ENCODE measurements at regions of chr19 and their contacts with region 1.

Region 1: DNA sequence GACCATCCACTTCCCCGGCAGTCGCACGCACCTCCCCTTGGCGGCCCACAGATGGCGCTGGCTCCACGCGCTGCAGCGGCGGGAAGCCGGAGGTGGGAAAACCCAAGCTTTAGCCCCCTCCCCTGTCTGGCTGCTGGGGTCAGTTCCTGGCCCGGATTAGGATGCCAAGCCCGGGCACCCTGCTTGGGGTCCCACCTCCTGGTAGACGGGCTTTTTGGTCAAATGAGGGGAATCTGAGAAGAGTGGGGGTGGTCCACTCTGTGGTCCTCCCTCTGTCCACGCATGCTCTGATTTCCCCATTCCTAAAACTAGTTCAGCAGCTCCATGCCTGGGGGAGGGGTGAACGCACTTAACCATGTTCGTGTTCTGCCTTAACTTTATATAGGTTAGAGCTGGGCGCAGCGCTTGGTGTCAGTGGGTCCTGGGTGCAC is 8.1 kb upstream of the ADGRE2 start:
- DNase-seq: no peak
- H3K4me3 ChIP-seq: peak overlapping the region in 1 of 3 experiments; percentile 11
- H3K27ac ChIP-seq: no peak overlapping the region
- H3K4me1 ChIP-seq: peaks cover 23% of the 10 kb centered on the region
- H3K27me3 ChIP-seq: no peaks in the 10 kb centered on the region
- CTCF ChIP-seq: peak; percentile 69 to 96

Region 2: GRCh38 chr19:14571695-14572490 is 214.5 kb before region 1 on chr19 and contains the start of gene NDUFB7:
- CTCF ChIA-PET with region 1: no interaction called
- dilution Hi-C with region 1: no loop called
- in situ Hi-C with region 1: no loop called
- intact Hi-C with region 1: loop called (anchors 1 kb)
- DNase-seq: peak; percentile 94
- H3K4me3 ChIP-seq: peak within 1 kb of the TSS; percentile 67 to 100 (median 99)
- H3K27ac ChIP-seq: peak within 1 kb of the TSS; percentile 70
- H3K4me1 ChIP-seq: peaks cover 14% of the 10 kb centered on the region
- H3K27me3 ChIP-seq: no peaks in the 10 kb centered on the region
- CTCF ChIP-seq: peak; percentile 68 to 85
- total RNA-seq, gene NDUFB7: 142 to 177 TPM

Region 3: DNA sequence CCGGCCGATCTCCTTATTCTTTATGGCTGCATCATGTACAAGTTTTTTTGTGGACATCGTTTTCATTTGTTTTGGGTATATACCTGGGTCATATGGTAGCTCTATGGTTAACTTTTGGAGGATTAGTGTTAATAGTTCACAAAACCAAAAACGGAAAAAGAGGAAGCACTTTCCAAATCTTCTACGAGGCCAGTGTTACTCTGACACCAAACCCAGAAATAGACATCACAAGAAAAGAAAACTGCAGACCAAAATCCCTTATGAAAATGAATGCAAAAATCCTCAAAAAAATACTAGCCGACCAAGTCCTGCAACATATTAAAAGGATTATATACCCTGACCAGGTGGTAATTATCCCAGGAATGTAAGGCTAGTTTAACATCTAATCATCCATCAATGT is 37.8 kb before region 1 on chr19:
- CTCF ChIA-PET with region 1: interaction called, 16 read pairs
- dilution Hi-C with region 1: no loop called
- in situ Hi-C with region 1: no loop called
- intact Hi-C with region 1: no loop called
- DNase-seq: no peak
- H3K4me3 ChIP-seq: no peak overlapping the region
- H3K27ac ChIP-seq: no peak overlapping the region
- H3K4me1 ChIP-seq: no peaks in the 10 kb centered on the region
- H3K27me3 ChIP-seq: no peaks in the 10 kb centered on the region
- CTCF ChIP-seq: no peak

Region 4: DNA sequence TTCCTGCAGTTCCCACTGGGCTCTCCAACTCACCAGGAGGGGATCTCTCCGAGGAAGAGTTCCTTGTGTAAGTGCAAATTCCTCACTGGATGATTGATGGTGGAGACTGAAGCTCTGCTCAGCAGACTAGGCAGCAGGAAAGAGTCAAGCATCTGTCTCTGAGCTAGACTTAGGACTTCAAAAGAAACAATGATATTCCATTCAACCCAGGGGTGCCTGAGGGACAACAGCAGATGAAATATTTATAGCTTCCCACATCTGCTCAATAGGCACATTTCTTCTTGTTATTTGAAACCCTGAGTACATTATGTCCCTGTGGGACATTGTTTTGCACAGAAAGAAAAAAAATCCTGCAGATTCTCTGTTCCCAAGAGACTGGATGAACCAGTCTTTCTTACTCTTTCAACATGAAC is 48.6 kb after region 1 on chr19 and contains the starts of genes OR7A5 and OR7C1:
- CTCF ChIA-PET with region 1: no interaction called
- dilution Hi-C with region 1: no loop called
- in situ Hi-C with region 1: no loop called
- intact Hi-C with region 1: no loop called
- DNase-seq: no peak
- H3K4me3 ChIP-seq: no peak within 1 kb of the TSS
- H3K27ac ChIP-seq: no peak within 1 kb of the TSS
- H3K4me1 ChIP-seq: peaks cover 3% of the 10 kb centered on the region
- H3K27me3 ChIP-seq: no peaks in the 10 kb centered on the region
- CTCF ChIP-seq: no peak
- total RNA-seq, gene OR7A5: not detected
- total RNA-seq, gene OR7C1: not detected

Region 5: DNA sequence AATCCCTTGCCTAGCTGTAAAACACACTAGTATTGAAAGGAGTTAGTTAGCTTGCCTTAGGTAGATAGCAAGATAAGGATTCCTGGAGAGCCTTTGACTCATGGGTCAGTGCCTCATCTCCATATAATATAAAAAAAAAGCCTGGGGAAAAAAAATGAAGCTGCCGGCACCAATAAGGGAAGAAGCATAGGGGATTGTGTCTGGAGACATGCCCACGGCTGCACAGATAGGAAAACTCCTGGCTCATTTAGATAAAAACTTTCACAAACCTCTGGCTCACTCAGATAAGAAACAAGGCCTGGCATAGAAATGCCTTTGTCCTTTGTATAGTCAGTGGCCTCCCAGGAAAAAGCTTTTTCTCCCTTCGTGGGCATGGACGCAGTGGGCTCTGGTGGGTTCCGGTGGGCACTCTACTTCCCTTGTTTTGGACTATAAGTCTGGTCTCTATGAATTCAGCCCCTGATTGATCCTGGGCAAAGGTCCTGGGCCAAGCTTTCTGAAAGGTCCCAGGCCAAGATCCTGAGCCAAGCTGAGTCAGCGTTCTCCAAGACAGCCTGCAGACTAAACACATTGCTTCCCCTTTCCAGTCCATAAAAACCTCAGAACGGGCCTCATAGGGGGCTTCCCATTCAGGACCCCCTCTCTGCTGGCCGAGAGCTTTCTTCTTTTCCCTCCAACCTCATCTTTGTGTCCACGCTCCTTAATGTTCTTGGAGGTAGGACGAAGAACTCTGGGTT is 104.4 kb after region 1 on chr19:
- CTCF ChIA-PET with region 1: no interaction called
- dilution Hi-C with region 1: no loop called
- in situ Hi-C with region 1: no loop called
- intact Hi-C with region 1: loop called (anchors 1 kb)
- DNase-seq: no peak
- H3K4me3 ChIP-seq: no peak overlapping the region
- H3K27ac ChIP-seq: no peak overlapping the region
- H3K4me1 ChIP-seq: no peaks in the 10 kb centered on the region
- H3K27me3 ChIP-seq: no peaks in the 10 kb centered on the region
- CTCF ChIP-seq: no peak